ENCODE measurements at regions of chr5 and their contacts with region 1.

Region 1: GRCh38 chr5:138408023-138408422 is 30.8 kb upstream of the REEP2 start:
- DNase-seq: peak; percentile 81
- ATAC-seq: peak; percentile 96
- H3K4me3 Mint-ChIP-seq: peak overlapping the region; percentile 19
- H3K27ac Mint-ChIP-seq: peak overlapping the region; percentile 38
- H3K4me1 Mint-ChIP-seq: peaks cover 14% of the 10 kb centered on the region
- H3K27me3 Mint-ChIP-seq: no peaks in the 10 kb centered on the region
- CTCF ChIP-seq: no peak

Region 2: DNA sequence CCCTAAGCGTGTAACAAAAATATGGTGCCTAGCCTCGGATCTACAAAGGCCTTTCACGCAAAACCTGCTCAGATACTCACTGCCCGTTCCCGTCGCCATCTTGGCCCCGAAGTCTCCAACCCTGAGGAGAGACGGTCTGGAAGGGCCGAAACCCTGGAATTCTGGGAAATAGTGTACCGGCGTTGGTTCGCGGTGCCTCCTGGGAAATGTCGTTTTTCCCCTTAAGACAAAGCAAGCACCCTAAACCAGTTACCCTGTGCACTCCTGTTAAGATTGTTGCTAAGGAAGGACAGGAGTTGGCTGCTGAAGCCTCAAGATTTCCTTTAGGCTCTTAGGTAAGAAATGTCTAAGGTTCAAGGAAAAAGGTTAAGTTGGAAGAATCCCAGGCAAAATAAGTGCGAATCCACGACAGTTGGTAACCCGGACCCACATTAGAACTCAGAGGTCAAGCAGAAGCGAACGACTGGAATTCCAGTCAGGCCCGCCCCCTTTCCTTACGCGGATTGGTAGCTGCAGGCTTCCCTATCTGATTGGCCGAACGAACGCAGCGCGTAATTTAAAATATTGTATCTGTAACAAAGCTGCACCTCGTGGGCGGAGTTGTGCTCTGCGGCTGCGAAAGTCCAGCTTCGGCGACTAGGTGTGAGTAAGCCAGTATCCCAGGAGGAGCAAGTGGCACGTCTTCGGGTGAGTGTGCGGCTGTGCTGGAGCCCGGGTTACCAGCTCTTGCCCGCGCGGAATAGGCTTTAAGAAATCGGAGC is 229.3 kb before region 1 on chr5 and contains the starts of genes BRD8 and KIF20A:
- CTCF ChIA-PET with region 1: interaction called, 19 read pairs
- POLR2A ChIA-PET with region 1: no interaction called
- intact Hi-C with region 1: no loop called
- DNase-seq: peak; percentile 98
- ATAC-seq: peak; percentile 91
- H3K4me3 Mint-ChIP-seq: no peak within 1 kb of the TSS
- H3K27ac Mint-ChIP-seq: no peak within 1 kb of the TSS
- H3K4me1 Mint-ChIP-seq: peaks cover 20% of the 10 kb centered on the region
- H3K27me3 Mint-ChIP-seq: no peaks in the 10 kb centered on the region
- CTCF ChIP-seq: no peak
- total RNA-seq, gene BRD8: 42.0 to 46.3 TPM
- total RNA-seq, gene KIF20A: 50.7 to 51.4 TPM

Region 3: GRCh38 chr5:138274189-138274853 is 133.7 kb before region 1 on chr5 and contains the start of gene GFRA3:
- CTCF ChIA-PET with region 1: no interaction called
- POLR2A ChIA-PET with region 1: no interaction called
- intact Hi-C with region 1: no loop called
- DNase-seq: peak; percentile 35
- ATAC-seq: peak; percentile 69
- H3K4me3 Mint-ChIP-seq: peak within 1 kb of the TSS; percentile 56
- H3K27ac Mint-ChIP-seq: no peak within 1 kb of the TSS
- H3K4me1 Mint-ChIP-seq: peaks cover 9% of the 10 kb centered on the region
- H3K27me3 Mint-ChIP-seq: peaks cover 24% of the 10 kb centered on the region
- CTCF ChIP-seq: no peak
- total RNA-seq, gene GFRA3: not detected